A673 (cell line): ENCODE measurements at regions of chr9 and their contacts with region 1.

Region 1: GRCh38 chr9:93962561-93963440 is 7.6 kb upstream of the BARX1 start:
- DNase-seq: peak; percentile 92
- H3K4me3 ChIP-seq: no peak overlapping the region
- H3K27ac ChIP-seq: no peak overlapping the region
- H3K4me1 ChIP-seq: peaks cover 19% of the 10 kb centered on the region
- H3K27me3 ChIP-seq: peaks cover 31% of the 10 kb centered on the region
- CTCF ChIP-seq: peak; percentile 87

Region 2: DNA sequence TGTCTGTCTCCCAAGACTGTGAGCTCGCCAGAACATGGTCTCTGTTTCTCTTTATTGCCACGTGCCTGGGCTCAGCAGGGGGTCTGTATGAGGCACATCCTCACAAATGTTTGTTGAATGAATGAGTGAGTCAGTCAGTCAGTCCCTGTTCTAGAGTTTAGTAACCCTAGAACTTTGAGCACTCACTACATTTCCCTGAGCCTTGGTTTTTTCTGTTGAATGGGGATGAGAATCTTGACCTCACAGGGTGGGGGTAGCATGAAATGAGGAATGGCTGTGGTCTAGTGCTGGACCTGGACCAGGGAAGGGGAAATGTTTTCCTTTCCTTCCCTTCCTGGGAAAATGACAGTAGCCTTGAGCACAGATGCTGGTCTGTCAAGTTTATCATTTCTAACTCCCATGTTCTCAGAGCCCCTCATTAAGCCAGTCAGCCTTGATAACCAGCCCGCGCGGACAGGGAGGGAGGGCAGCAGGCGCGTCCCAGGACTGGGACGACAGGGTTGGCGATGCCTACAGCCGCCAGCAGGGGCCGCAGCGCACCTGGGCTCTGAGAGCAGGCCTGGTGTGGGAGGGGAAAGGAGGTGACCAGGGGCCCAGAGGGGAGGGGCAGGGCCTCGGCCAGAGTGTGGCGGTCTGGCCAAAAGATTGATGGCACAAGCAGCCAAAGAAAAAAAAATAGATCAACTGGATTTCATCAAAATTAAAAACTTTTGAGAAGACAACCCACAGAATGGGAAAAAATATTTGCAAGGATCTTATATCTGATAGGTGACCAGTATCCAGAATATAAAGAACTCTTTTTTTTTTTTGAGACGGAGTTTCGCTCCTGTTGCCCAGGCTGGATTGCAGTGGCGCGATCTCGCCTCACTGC is 803.0 kb before region 1 on chr9:
- CTCF ChIA-PET with region 1: no interaction called
- POLR2A ChIA-PET with region 1: no interaction called
- intact Hi-C with region 1: loop called (anchors 10 kb)
- DNase-seq: peak; percentile 69
- H3K4me3 ChIP-seq: no peak overlapping the region
- H3K27ac ChIP-seq: no peak overlapping the region
- H3K4me1 ChIP-seq: no peaks in the 10 kb centered on the region
- H3K27me3 ChIP-seq: no peaks in the 10 kb centered on the region
- CTCF ChIP-seq: peak; percentile 98

Region 3: GRCh38 chr9:93684806-93685543 is 277.8 kb before region 1 on chr9:
- CTCF ChIA-PET with region 1: no interaction called
- POLR2A ChIA-PET with region 1: no interaction called
- intact Hi-C with region 1: loop called (anchors 1 kb)
- DNase-seq: peak; percentile 29
- H3K4me3 ChIP-seq: no peak overlapping the region
- H3K27ac ChIP-seq: no peak overlapping the region
- H3K4me1 ChIP-seq: no peaks in the 10 kb centered on the region
- H3K27me3 ChIP-seq: no peaks in the 10 kb centered on the region
- CTCF ChIP-seq: peak; percentile 48

Region 4: DNA sequence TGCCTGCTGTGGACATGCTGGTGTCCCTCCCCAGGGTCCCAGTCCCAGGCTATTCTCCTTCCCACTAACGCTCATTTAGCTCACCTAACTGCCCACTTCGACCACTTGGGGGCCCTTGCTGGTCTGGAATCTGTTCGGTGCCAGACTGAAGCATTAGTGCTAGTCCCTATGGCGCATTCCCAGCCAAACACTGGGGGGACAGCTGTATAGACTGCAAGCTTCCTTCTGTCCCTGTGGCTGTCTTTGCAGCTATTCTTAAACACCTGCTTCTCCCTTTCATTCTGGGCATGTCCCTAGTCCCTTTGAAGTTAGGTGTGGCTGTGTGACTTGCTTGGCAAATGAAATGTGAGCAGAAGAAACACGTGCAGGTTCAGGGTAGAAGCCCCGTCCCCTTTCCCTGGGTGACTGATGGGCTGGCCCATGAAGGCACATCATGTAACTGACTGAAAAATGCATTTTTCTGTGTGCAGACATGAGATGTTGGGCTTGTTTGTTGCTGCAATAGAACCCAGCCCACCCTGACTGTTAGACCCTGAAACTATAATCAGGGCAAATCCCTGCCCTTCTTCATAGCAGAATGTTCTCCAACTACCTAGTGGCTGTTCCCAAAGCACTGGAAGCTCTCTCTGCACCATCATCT is 142.0 kb before region 1 on chr9:
- CTCF ChIA-PET with region 1: no interaction called
- POLR2A ChIA-PET with region 1: no interaction called
- intact Hi-C with region 1: loop called (anchors 5 kb)
- DNase-seq: no peak
- H3K4me3 ChIP-seq: no peak overlapping the region
- H3K27ac ChIP-seq: no peak overlapping the region
- H3K4me1 ChIP-seq: no peaks in the 10 kb centered on the region
- H3K27me3 ChIP-seq: peaks cover 11% of the 10 kb centered on the region
- CTCF ChIP-seq: 0 out of 2 replicates have a peak, but pooled peaks have one; percentile 26

Region 5: GRCh38 chr9:93931905-93932304 is 30.9 kb before region 1 on chr9:
- CTCF ChIA-PET with region 1: no interaction called
- POLR2A ChIA-PET with region 1: no interaction called
- intact Hi-C with region 1: no loop called
- DNase-seq: no peak
- H3K4me3 ChIP-seq: no peak overlapping the region
- H3K27ac ChIP-seq: no peak overlapping the region
- H3K4me1 ChIP-seq: no peaks in the 10 kb centered on the region
- H3K27me3 ChIP-seq: peaks cover 8% of the 10 kb centered on the region
- CTCF ChIP-seq: no peak